ENCODE measurements at regions of chr16 and their contacts with region 1.

Region 1: GRCh38 chr16:2752035-2752849 is at the start of gene SRRM2:
- DNase-seq: peak; percentile 90 to 98 (median 95)
- ATAC-seq: peak; percentile 85
- H3K4me3 ChIP-seq: peak within 1 kb of the TSS; percentile 91 to 100
- H3K4me3 Mint-ChIP-seq: peak within 1 kb of the TSS; percentile 94
- H3K27ac ChIP-seq: peak within 1 kb of the TSS; percentile 96 to 99
- H3K27ac Mint-ChIP-seq: peak within 1 kb of the TSS; percentile 99
- H3K4me1 ChIP-seq: peaks cover 43% of the 10 kb centered on the region
- H3K4me1 Mint-ChIP-seq: peaks cover 44% of the 10 kb centered on the region
- H3K27me3 ChIP-seq: no peaks in the 10 kb centered on the region
- H3K27me3 Mint-ChIP-seq: no peaks in the 10 kb centered on the region
- CTCF ChIP-seq: no peak
- total RNA-seq, gene SRRM2: 1,249 to 1,283 TPM

Region 2: GRCh38 chr16:1631931-1632637 is 1120.2 kb before region 1 on chr16:
- CTCF ChIA-PET with region 1: no interaction called
- POLR2A ChIA-PET with region 1: no interaction called
- intact Hi-C with region 1: no loop called
- DNase-seq: no peak
- ATAC-seq: no peak
- H3K4me3 ChIP-seq: no peak overlapping the region
- H3K4me3 Mint-ChIP-seq: no peak overlapping the region
- H3K27ac ChIP-seq: no peak overlapping the region
- H3K27ac Mint-ChIP-seq: no peak overlapping the region
- H3K4me1 ChIP-seq: no peaks in the 10 kb centered on the region
- H3K4me1 Mint-ChIP-seq: no peaks in the 10 kb centered on the region
- H3K27me3 ChIP-seq: no peaks in the 10 kb centered on the region
- H3K27me3 Mint-ChIP-seq: no peaks in the 10 kb centered on the region
- CTCF ChIP-seq: no peak

Region 3: DNA sequence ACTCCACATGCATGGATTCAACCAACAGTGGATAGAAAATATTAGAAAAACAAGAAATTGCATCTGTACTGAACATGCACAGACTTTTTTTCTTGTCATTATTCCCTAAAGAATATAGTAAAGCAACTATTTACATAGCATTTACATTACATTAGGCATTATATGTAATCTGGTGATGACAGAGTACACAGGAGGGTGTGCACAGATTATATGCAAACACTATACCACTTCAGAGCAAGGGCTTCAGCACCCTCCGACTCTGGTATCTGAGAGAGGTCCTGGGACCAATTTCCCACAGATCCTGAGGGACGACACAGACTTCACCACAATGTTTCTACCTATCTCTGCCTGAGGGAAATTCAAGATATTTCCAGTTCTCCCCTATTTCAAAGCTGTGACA is 95.3 kb before region 1 on chr16:
- CTCF ChIA-PET with region 1: no interaction called
- POLR2A ChIA-PET with region 1: no interaction called
- intact Hi-C with region 1: no loop called
- DNase-seq: no peak
- ATAC-seq: no peak
- H3K4me3 ChIP-seq: no peak overlapping the region
- H3K4me3 Mint-ChIP-seq: no peak overlapping the region
- H3K27ac ChIP-seq: no peak overlapping the region
- H3K27ac Mint-ChIP-seq: no peak overlapping the region
- H3K4me1 ChIP-seq: no peaks in the 10 kb centered on the region
- H3K4me1 Mint-ChIP-seq: peaks cover 20% of the 10 kb centered on the region
- H3K27me3 ChIP-seq: no peaks in the 10 kb centered on the region
- H3K27me3 Mint-ChIP-seq: no peaks in the 10 kb centered on the region
- CTCF ChIP-seq: no peak

Region 4: GRCh38 chr16:2673066-2673999 is 78.9 kb before region 1 on chr16:
- CTCF ChIA-PET with region 1: no interaction called
- POLR2A ChIA-PET with region 1: interaction called, 3 read pairs
- intact Hi-C with region 1: loop called (anchors 1 kb)
- DNase-seq: peak; percentile 91 to 98 (median 95)
- ATAC-seq: peak; percentile 92
- H3K4me3 ChIP-seq: peak overlapping the region; percentile 80 to 94
- H3K4me3 Mint-ChIP-seq: peak overlapping the region; percentile 84
- H3K27ac ChIP-seq: peak overlapping the region; percentile 76 to 78
- H3K27ac Mint-ChIP-seq: peak overlapping the region; percentile 80
- H3K4me1 ChIP-seq: peaks cover 14% of the 10 kb centered on the region
- H3K4me1 Mint-ChIP-seq: peaks cover 35% of the 10 kb centered on the region
- H3K27me3 ChIP-seq: no peaks in the 10 kb centered on the region
- H3K27me3 Mint-ChIP-seq: no peaks in the 10 kb centered on the region
- CTCF ChIP-seq: no peak

Region 5: DNA sequence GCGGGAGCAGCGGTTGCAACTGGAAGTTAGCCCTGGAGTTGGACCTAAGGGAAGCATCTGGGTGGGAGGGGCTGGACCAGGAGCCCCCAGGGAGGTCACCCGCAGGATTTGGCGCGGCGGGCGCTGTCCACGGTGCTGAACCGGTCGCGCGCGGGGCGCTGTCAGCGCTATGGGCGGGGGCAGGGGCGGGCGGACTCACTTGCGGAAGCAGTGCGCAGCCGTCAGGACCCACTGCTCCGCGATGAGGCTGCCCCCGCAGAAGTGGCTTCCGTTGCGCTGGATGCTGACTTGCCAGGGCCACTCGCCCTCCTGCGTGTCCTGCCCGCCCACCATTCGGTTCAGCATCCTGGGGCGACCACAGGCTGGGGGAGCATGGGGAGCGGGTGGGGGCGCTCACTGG is 36.7 kb before region 1 on chr16:
- CTCF ChIA-PET with region 1: no interaction called
- POLR2A ChIA-PET with region 1: interaction called, 5 read pairs
- intact Hi-C with region 1: loop called in 1 of 2 experiments (anchors 1 kb)
- DNase-seq: peak; percentile 70 to 90 (median 87)
- ATAC-seq: peak; percentile 99
- H3K4me3 ChIP-seq: peak overlapping the region; percentile 8 to 33
- H3K4me3 Mint-ChIP-seq: peak overlapping the region; percentile 5
- H3K27ac ChIP-seq: no peak overlapping the region
- H3K27ac Mint-ChIP-seq: no peak overlapping the region
- H3K4me1 ChIP-seq: peaks cover 5% of the 10 kb centered on the region
- H3K4me1 Mint-ChIP-seq: peaks cover 3% of the 10 kb centered on the region
- H3K27me3 ChIP-seq: no peaks in the 10 kb centered on the region
- H3K27me3 Mint-ChIP-seq: no peaks in the 10 kb centered on the region
- CTCF ChIP-seq: no peak

Region 6: GRCh38 chr16:2739625-2740435 is 12.4 kb before region 1 on chr16:
- CTCF ChIA-PET with region 1: no interaction called
- POLR2A ChIA-PET with region 1: no interaction called
- intact Hi-C with region 1: no loop called
- DNase-seq: no peak
- ATAC-seq: no peak
- H3K4me3 ChIP-seq: no peak overlapping the region
- H3K4me3 Mint-ChIP-seq: no peak overlapping the region
- H3K27ac ChIP-seq: no peak overlapping the region
- H3K27ac Mint-ChIP-seq: no peak overlapping the region
- H3K4me1 ChIP-seq: no peaks in the 10 kb centered on the region
- H3K4me1 Mint-ChIP-seq: no peaks in the 10 kb centered on the region
- H3K27me3 ChIP-seq: no peaks in the 10 kb centered on the region
- H3K27me3 Mint-ChIP-seq: peaks cover 2% of the 10 kb centered on the region
- CTCF ChIP-seq: no peak

Region 7: GRCh38 chr16:2769675-2770056 is 17.4 kb after region 1 on chr16:
- CTCF ChIA-PET with region 1: interaction called, 3 read pairs
- POLR2A ChIA-PET with region 1: interaction called, 7 read pairs
- intact Hi-C with region 1: loop called in 1 of 2 experiments (anchors 2 kb)
- DNase-seq: no peak
- ATAC-seq: no peak
- H3K4me3 ChIP-seq: no peak overlapping the region
- H3K4me3 Mint-ChIP-seq: no peak overlapping the region
- H3K27ac ChIP-seq: no peak overlapping the region
- H3K27ac Mint-ChIP-seq: peak overlapping the region; percentile 71
- H3K4me1 ChIP-seq: peaks cover 3% of the 10 kb centered on the region
- H3K4me1 Mint-ChIP-seq: peaks cover 28% of the 10 kb centered on the region
- H3K27me3 ChIP-seq: no peaks in the 10 kb centered on the region
- H3K27me3 Mint-ChIP-seq: no peaks in the 10 kb centered on the region
- CTCF ChIP-seq: no peak

Region 8: DNA sequence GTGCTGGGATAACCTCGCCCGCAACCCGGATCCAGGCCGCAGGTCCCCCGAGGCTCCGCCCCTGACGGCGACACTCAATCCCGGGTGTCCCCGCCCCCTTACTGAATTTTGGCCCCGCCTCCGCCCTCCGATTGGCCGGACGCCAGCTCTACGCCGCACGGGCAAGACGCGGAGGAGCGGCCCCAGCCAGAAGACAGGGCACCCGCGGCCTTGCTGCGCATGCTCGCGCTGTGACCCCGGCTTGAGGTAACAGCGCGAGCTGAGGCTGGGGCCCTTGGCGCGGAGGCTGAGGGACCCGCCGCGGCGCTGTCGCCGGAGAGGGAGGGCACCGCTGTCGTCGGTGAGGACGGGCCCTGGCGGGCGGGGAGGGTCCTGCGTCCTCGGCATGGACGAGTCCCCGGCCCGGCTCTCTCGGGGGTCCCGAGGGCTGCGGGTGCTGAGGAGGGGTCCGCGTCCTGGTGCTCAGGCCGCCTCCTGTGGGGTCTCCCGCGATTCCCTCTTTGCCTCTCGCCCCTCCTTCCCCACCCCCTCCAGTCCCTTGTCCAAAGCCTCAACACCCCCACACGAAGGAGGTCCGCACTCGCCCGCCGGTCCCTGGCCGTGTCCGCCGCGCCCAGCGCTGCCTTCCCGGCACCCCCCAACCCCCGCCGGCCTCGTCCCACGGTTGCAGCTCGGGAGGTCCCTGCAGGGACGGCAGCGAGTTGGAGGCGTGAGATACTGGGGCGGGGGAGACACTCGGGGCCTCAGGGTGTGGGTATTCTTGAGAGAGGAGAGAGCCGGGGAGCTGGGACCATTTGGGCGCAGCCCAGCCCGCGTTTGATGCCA is 131.0 kb after region 1 on chr16 and contains the start of gene FLYWCH2:
- CTCF ChIA-PET with region 1: no interaction called
- POLR2A ChIA-PET with region 1: interaction called, 3 read pairs
- intact Hi-C with region 1: loop called in 1 of 2 experiments (anchors 1 kb)
- DNase-seq: peak; percentile 98 to 100 (median 99)
- ATAC-seq: peak; percentile 83
- H3K4me3 ChIP-seq: peak within 1 kb of the TSS; percentile 69 to 78
- H3K4me3 Mint-ChIP-seq: peak within 1 kb of the TSS; percentile 87
- H3K27ac ChIP-seq: peak within 1 kb of the TSS; percentile 90 to 94
- H3K27ac Mint-ChIP-seq: peak within 1 kb of the TSS; percentile 95
- H3K4me1 ChIP-seq: peaks cover 9% of the 10 kb centered on the region
- H3K4me1 Mint-ChIP-seq: peaks cover 17% of the 10 kb centered on the region
- H3K27me3 ChIP-seq: no peaks in the 10 kb centered on the region
- H3K27me3 Mint-ChIP-seq: no peaks in the 10 kb centered on the region
- CTCF ChIP-seq: no peak
- total RNA-seq, gene FLYWCH2: 9.3 to 10.9 TPM

Region 9: DNA sequence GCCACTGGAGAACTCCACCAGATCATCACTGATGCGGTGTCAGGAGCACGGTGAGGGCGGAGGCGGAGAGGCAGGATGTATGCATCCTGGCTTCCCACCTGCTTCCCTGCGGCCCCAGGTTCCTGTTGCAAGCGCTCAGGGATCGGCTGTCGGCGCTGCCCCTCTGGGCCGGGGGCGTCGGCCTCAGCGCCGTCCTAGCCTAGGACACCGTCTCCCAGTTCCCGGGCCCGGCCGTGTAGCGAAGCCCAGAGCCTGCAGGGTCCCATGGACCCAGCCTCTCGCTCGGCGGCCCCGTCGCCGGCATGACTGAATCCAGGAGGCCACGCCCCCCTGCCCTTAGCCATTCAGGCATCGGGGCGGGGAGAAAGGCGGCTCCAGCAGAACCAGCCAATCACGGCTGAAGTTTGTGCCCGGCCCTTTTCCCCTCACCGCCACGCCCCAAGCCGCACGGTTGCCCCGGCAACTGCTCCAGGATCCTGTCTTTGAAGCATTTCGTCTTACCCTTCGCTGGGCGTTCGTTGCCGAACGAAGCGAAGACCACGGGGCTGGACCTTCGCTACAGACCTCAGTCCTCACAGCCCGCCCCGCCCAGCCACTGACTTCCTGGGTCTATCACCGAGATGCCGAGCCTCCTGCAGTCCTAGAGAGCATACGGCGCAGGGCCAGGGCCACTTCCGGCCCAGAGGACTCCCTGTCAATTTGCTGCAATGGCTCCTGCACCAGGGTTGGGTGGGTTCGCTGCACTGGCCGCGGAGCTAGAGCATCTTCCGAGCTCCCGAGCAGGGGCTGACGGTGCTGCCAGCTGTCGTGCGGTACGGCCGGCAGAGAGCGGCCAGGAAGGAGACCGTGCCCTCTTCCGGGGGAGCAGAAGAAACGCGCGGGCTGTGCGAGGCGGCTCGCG is 372.0 kb after region 1 on chr16:
- CTCF ChIA-PET with region 1: no interaction called
- POLR2A ChIA-PET with region 1: no interaction called
- intact Hi-C with region 1: no loop called
- DNase-seq: peak; percentile 88 to 98 (median 97)
- ATAC-seq: peak; percentile 90
- H3K4me3 ChIP-seq: peak overlapping the region; percentile 72 to 89
- H3K4me3 Mint-ChIP-seq: peak overlapping the region; percentile 98
- H3K27ac ChIP-seq: peak overlapping the region; percentile 44 to 72
- H3K27ac Mint-ChIP-seq: peak overlapping the region; percentile 95
- H3K4me1 ChIP-seq: peaks cover 30% of the 10 kb centered on the region
- H3K4me1 Mint-ChIP-seq: peaks cover 45% of the 10 kb centered on the region
- H3K27me3 ChIP-seq: no peaks in the 10 kb centered on the region
- H3K27me3 Mint-ChIP-seq: no peaks in the 10 kb centered on the region
- CTCF ChIP-seq: no peak

Measured in CD8-positive, alpha-beta T cell (primary cell).